Left cardiac atrium (tissue), 4 donors: ENCODE measurements at regions of chrX and their contacts with region 1.

Region 1: DNA sequence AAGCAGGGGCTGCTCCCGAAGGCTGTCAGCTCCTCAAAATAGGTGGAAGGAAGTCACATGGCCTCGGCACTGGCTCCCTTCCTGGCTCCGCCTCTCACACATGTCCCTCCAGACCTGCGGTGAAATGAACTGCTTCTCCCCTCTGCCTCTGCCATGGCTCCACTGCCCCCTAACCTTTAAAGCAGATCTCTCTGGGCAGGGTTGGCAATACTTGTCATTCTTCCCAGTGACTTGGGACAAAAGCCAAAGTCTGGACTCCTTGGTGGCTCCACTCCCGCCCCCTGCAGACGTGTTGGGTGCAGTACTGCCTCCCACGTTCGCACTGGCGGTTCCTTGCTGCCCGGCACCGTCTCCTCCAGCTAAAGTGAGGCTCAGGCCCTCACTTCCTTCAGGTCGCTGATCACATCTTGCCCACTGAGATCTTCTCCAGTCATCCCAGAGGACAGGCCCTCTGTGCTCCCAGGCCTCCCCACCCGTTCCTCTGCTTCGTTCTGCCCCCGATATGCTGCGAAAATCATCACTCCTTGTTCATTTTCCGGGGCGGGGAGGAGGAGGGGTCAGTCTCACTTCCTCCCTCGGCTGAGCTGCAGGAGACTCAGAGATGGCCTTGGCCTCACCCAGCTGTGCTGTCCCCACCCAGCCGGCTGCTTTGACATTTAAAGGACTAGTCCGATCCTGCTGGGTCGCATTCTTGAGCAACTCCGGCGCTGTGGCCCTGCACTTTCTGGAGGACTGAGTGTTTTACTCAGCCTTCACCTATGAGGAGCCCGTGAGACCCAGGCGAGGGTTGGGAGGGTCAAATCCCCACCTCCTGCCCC is 97.4 kb downstream of the PHKA2 start:
- DNase-seq: peak; percentile 80
- ATAC-seq: peak; percentile 64 to 82

Region 2: DNA sequence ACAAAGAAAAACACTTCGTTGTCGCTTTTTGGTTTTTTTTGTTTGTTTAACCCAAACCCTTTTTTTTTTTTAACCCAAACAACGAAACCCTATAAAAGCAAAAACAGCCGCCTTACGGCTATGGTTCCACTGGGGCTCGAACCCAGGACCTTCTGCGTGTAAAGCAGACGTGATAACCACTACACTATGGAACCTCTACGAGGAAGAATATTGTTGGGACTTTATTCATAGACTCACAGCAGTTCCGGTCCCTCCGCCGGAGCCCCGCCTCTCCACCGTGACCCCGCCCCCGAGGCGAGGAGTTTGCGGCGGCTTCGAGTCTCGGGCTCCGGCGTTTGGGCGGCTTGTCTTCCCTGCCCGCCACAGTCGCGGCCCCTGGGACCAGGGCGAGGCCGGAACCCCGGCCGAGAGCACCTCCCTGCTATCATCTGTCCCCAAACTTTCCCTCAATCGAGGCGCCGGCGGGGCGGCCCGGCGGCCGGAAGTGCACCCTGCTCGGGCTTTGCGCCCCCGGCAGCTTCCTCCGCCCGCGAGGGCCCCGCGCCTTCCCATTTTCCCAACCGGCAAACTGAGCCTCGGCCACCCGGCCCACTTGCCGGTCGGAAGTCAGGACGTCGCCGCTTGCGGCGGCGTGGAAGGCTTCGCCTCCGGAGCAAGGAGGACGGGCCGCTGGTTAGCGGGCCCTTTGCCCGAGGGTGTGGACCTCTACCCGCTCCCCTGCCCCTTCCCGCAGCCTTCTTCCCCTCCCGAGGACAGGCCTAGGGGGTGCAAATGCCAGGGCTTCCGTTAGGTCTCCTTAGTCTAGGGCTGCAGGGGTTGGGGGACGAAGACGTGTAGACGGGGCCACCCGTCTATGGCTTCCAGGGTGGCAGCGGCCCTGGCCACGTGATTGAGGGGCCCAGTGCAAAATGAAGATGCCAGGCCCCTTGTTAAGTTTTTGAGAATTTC is 211.5 kb before region 1 on chrX:
- intact Hi-C with region 1: loop called in 1 of 2 experiments (anchors 5 kb)
- DNase-seq: peak; percentile 79
- ATAC-seq: peak; percentile 96

Region 3: DNA sequence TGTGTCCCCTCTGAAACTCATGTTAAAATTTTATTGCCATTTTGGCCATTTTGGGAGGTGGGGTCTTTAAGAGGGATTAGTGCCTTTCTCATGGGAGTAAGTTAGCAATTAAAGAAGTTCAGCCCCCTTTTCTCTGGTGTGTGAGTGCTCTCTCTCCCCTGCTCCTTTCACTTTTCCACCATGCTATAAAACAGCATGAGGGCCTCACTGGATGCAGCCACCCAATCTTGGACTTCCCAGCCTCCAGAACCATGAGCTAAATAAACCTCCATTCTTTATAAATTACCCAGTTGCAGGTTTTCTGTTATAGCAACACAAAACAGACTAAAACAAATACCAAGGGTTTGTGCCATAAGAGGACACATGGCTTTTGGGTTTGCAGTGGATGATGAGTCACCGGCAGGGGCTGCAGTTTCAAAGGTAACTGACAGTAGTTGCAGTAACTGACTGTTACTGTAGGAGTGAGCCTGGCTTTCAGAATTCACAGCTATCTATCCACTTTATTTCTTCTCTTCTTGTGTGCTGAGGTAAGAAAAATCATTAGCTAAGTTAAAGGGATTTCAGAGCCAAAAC is 57.6 kb before region 1 on chrX:
- intact Hi-C with region 1: loop called in 1 of 2 experiments (anchors 5 kb)
- DNase-seq: no peak
- ATAC-seq: no peak